ENCODE measurements at regions of chr11 and their contacts with region 1.

Region 1: GRCh38 chr11:94134651-94135512 is 6.2 kb downstream of the PANX1 start:
- DNase-seq: peak in 3 of 14 experiments; percentile 13 to 54 (median 46)
- ATAC-seq: no peak
- H3K4me3 ChIP-seq: no peak overlapping the region
- H3K4me3 Mint-ChIP-seq: no peak overlapping the region
- H3K27ac ChIP-seq: no peak overlapping the region
- H3K27ac Mint-ChIP-seq: no peak overlapping the region
- H3K4me1 ChIP-seq: peaks cover 42% of the 10 kb centered on the region
- H3K4me1 Mint-ChIP-seq: peaks cover 47% of the 10 kb centered on the region
- H3K27me3 ChIP-seq: no peaks in the 10 kb centered on the region
- H3K27me3 Mint-ChIP-seq: no peaks in the 10 kb centered on the region
- CTCF ChIP-seq: no peak

Region 2: GRCh38 chr11:93197380-93198214 is 937.3 kb before region 1 on chr11 and contains the start of gene SLC36A4:
- CTCF ChIA-PET with region 1: no interaction called
- POLR2A ChIA-PET with region 1: interaction called, 3 read pairs
- intact Hi-C with region 1: loop called in 1 of 2 experiments (anchors 10 kb)
- DNase-seq: peak; percentile 76 to 95 (median 80)
- ATAC-seq: peak; percentile 88
- H3K4me3 ChIP-seq: peak within 1 kb of the TSS; percentile 78
- H3K4me3 Mint-ChIP-seq: peak within 1 kb of the TSS; percentile 94
- H3K27ac ChIP-seq: peak within 1 kb of the TSS; percentile 85 to 90
- H3K27ac Mint-ChIP-seq: peak within 1 kb of the TSS; percentile 97
- H3K4me1 ChIP-seq: peaks cover 6% of the 10 kb centered on the region
- H3K4me1 Mint-ChIP-seq: peaks cover 26% of the 10 kb centered on the region
- H3K27me3 ChIP-seq: no peaks in the 10 kb centered on the region
- H3K27me3 Mint-ChIP-seq: no peaks in the 10 kb centered on the region
- CTCF ChIP-seq: no peak
- total RNA-seq, gene SLC36A4: 15.9 to 16.4 TPM

Region 3: DNA sequence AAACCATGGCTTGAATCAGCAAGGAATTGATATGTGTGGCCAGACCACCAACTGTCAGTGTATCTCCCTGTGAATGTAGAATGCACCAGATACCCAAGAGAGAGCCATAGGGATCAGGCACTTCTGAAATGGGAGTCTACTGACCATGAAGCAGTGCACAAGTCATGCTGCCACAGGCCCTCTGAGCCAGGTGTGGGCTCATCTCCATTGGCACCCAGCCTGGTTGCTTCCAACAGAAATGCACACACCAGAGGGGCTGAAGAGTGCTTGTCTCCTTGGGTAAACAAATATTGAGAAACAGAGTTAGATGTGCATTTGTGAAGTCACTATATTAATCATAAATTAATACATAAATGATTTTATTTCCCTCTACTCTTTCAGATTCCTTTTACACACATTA is 34.6 kb before region 1 on chr11:
- CTCF ChIA-PET with region 1: no interaction called
- POLR2A ChIA-PET with region 1: no interaction called
- intact Hi-C with region 1: no loop called
- DNase-seq: no peak
- ATAC-seq: no peak
- H3K4me3 ChIP-seq: no peak overlapping the region
- H3K4me3 Mint-ChIP-seq: no peak overlapping the region
- H3K27ac ChIP-seq: no peak overlapping the region
- H3K27ac Mint-ChIP-seq: no peak overlapping the region
- H3K4me1 ChIP-seq: no peaks in the 10 kb centered on the region
- H3K4me1 Mint-ChIP-seq: no peaks in the 10 kb centered on the region
- H3K27me3 ChIP-seq: no peaks in the 10 kb centered on the region
- H3K27me3 Mint-ChIP-seq: peaks cover 12% of the 10 kb centered on the region
- CTCF ChIP-seq: no peak

Measured in CD4-positive, alpha-beta T cell (primary cell).